ENCODE measurements at regions of chr12 and their contacts with region 1.

Region 1: GRCh38 chr12:130818635-130819576 is 20.1 kb downstream of the STX2 start:
- DNase-seq: peak; percentile 36
- H3K4me3 ChIP-seq: peak overlapping the region; percentile 33 to 67 (median 66)
- H3K27ac ChIP-seq: no peak overlapping the region
- H3K4me1 ChIP-seq: no peaks in the 10 kb centered on the region
- H3K27me3 ChIP-seq: no peaks in the 10 kb centered on the region
- CTCF ChIP-seq: peak; percentile 78 to 85
- POLR2A ChIP-seq: no peak

Region 2: GRCh38 chr12:130761537-130762318 is 57.2 kb before region 1 on chr12:
- CTCF ChIA-PET with region 1: no interaction called
- POLR2A ChIA-PET with region 1: no interaction called
- dilution Hi-C with region 1: no loop called
- intact Hi-C with region 1: loop called (anchors 1 kb)
- DNase-seq: no peak
- H3K4me3 ChIP-seq: no peak overlapping the region
- H3K27ac ChIP-seq: no peak overlapping the region
- H3K4me1 ChIP-seq: no peaks in the 10 kb centered on the region
- H3K27me3 ChIP-seq: no peaks in the 10 kb centered on the region
- CTCF ChIP-seq: peak in 1 of 2 donors; percentile 35
- POLR2A ChIP-seq: no peak